ENCODE measurements at regions of chr4 and their contacts with region 1.

Region 1: GRCh38 chr4:75876218-75876617 is 26.0 kb downstream of the PPEF2 start:
- DNase-seq: no peak
- ATAC-seq: no peak
- H3K4me3 ChIP-seq: no peak overlapping the region
- H3K4me3 Mint-ChIP-seq: no peak overlapping the region
- H3K27ac ChIP-seq: no peak overlapping the region
- H3K27ac Mint-ChIP-seq: no peak overlapping the region
- H3K4me1 ChIP-seq: no peaks in the 10 kb centered on the region
- H3K4me1 Mint-ChIP-seq: no peaks in the 10 kb centered on the region
- H3K27me3 ChIP-seq: peaks cover 0 to 6% of the 10 kb centered on the region in 2 experiments
- H3K27me3 Mint-ChIP-seq: no peaks in the 10 kb centered on the region

Region 2: DNA sequence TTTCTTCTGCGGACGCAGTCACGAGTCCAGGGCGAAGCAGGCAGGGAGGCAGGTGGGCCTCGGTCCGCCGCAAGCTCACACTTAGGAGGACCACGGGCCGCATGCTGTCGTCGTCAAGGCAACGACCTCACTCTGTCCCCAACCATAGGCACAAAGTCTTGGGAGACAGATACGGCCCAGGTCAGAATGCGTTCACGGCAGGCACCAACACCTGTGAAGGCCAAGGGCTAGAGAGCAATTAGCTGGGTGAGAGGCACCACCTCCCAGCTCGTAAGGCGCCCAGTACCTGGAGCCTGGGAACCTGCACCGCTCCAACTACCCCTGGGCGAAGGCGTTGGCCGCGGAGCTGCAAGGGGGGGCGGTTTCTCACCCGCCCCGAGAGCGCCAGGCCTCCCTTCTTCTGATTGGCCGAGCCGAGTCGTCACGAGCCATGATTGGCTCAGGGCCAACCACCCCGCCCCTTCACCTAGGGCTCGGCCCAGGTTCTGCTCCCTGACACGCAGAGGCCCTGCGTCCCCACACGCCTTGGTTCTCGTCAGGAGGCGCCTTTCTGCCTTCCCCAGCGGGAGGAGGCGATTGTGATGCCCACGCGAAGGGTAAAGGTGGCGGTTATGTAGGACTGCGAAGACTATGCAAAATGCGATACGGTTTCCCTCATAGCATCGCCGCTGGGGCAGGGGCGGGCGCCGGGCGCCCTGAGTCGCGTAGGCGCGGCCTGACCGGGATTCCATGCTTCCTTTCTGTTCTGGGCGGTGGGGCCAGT is 245.9 kb before region 1 on chr4 and contains the start of gene CDKL2:
- CTCF ChIA-PET with region 1: no interaction called
- POLR2A ChIA-PET with region 1: no interaction called
- DNase-seq: peak; percentile 81 to 96 (median 89)
- ATAC-seq: peak; percentile 98 to 100 (median 99)
- H3K4me3 ChIP-seq: peak within 1 kb of the TSS; percentile 71 to 83
- H3K4me3 Mint-ChIP-seq: peak within 1 kb of the TSS; percentile 87 to 92 (median 89)
- H3K27ac ChIP-seq: peak within 1 kb of the TSS; percentile 35
- H3K27ac Mint-ChIP-seq: peak within 1 kb of the TSS; percentile 66 to 70
- H3K4me1 ChIP-seq: peaks cover 5 to 16% of the 10 kb centered on the region in 2 experiments
- H3K4me1 Mint-ChIP-seq: peaks cover 8 to 10% (median 10%) of the 10 kb centered on the region in 3 donors
- H3K27me3 ChIP-seq: no peaks in the 10 kb centered on the region
- H3K27me3 Mint-ChIP-seq: no peaks in the 10 kb centered on the region
- total RNA-seq, gene CDKL2: 0.26 to 1.9 (median 0.79) TPM

Region 3: GRCh38 chr4:75844151-75844662 is 32.0 kb before region 1 on chr4:
- CTCF ChIA-PET with region 1: no interaction called
- POLR2A ChIA-PET with region 1: no interaction called
- DNase-seq: no peak
- ATAC-seq: no peak
- H3K4me3 ChIP-seq: no peak overlapping the region
- H3K4me3 Mint-ChIP-seq: no peak overlapping the region
- H3K27ac ChIP-seq: no peak overlapping the region
- H3K27ac Mint-ChIP-seq: no peak overlapping the region
- H3K4me1 ChIP-seq: peaks cover 0 to 4% of the 10 kb centered on the region in 2 experiments
- H3K4me1 Mint-ChIP-seq: no peaks in the 10 kb centered on the region
- H3K27me3 ChIP-seq: peaks cover 0 to 4% of the 10 kb centered on the region in 2 experiments
- H3K27me3 Mint-ChIP-seq: no peaks in the 10 kb centered on the region

Region 4: GRCh38 chr4:76856243-76857073 is 980.2 kb after region 1 on chr4:
- CTCF ChIA-PET with region 1: no interaction called
- POLR2A ChIA-PET with region 1: interaction called in 1 of 2 experiments, 11 read pairs
- DNase-seq: no peak
- ATAC-seq: no peak
- H3K4me3 ChIP-seq: no peak overlapping the region
- H3K4me3 Mint-ChIP-seq: no peak overlapping the region
- H3K27ac ChIP-seq: no peak overlapping the region
- H3K27ac Mint-ChIP-seq: no peak overlapping the region
- H3K4me1 ChIP-seq: no peaks in the 10 kb centered on the region
- H3K4me1 Mint-ChIP-seq: peaks cover 0 to 3% (median 0%) of the 10 kb centered on the region in 3 donors
- H3K27me3 ChIP-seq: peaks cover 0 to 7% of the 10 kb centered on the region in 2 experiments
- H3K27me3 Mint-ChIP-seq: peaks cover 0 to 4% of the 10 kb centered on the region in 2 donors

Measured in T-cell (primary cell).